ENCODE measurements at regions of chr20 and their contacts with region 1.

Region 1: DNA sequence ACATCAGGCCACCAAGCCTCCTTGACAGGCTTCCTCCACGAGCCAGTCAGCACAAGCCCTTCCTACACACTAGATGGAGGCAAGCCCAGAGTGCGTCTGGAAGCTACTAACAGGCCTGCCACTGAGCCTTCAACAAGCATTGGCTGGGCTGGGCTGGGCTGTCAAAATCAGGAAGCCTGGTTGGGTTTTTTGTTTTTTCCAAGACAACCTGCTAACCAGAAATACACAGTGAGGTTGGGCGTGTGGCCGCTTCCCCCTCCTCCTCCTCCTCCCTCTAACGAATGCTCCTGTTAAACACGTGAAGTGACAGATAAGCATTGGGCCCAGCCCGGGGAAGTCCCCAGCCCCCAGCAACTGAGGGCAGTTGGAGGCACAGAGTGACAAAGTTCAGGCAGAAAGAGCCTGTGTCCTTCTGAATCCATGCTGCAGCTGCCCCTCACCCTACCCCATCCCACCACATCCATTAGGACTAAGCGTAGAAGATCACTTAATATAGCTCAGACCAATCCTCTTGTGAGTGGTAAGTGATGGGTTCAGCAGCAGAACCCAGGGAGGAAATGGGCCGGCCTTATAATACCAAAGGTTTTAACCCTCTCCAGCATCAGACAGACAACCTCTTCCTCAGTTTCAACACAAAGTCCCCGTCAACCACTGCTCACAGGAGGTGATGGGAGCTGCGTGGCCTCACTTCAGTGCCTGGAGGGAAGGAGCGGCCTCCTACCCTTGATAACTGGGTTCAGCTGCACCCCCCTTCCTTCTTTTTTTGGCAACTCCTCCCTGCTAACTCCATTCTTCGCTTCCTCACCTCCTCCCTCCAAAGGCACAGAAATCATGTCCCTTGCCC is 1.1 kb downstream of the NFATC2 start:
- DNase-seq: peak; percentile 92
- H3K4me3 Mint-ChIP-seq: peak overlapping the region; percentile 98
- H3K27ac Mint-ChIP-seq: peak overlapping the region; percentile 98
- H3K4me1 Mint-ChIP-seq: peaks cover 49% of the 10 kb centered on the region
- H3K27me3 Mint-ChIP-seq: peaks cover 3% of the 10 kb centered on the region

Region 2: GRCh38 chr20:51385646-51386530 is 155.5 kb before region 1 on chr20:
- CTCF ChIA-PET with region 1: interaction called, 19 read pairs
- POLR2A ChIA-PET with region 1: interaction called, 3 read pairs
- intact Hi-C with region 1: loop called (anchors 1 kb)
- DNase-seq: peak; percentile 50
- H3K4me3 Mint-ChIP-seq: no peak overlapping the region
- H3K27ac Mint-ChIP-seq: no peak overlapping the region
- H3K4me1 Mint-ChIP-seq: peaks cover 73% of the 10 kb centered on the region
- H3K27me3 Mint-ChIP-seq: no peaks in the 10 kb centered on the region

Region 3: GRCh38 chr20:51423290-51423667 is 118.1 kb before region 1 on chr20:
- CTCF ChIA-PET with region 1: interaction called, 5 read pairs
- POLR2A ChIA-PET with region 1: interaction called, 10 read pairs
- intact Hi-C with region 1: loop called (anchors 1 kb)
- DNase-seq: peak; percentile 78
- H3K4me3 Mint-ChIP-seq: peak overlapping the region; percentile 13
- H3K27ac Mint-ChIP-seq: peak overlapping the region; percentile 90
- H3K4me1 Mint-ChIP-seq: peaks cover 86% of the 10 kb centered on the region
- H3K27me3 Mint-ChIP-seq: no peaks in the 10 kb centered on the region

Region 4: GRCh38 chr20:51480507-51481270 is 60.7 kb before region 1 on chr20:
- CTCF ChIA-PET with region 1: no interaction called
- POLR2A ChIA-PET with region 1: interaction called, 20 read pairs
- intact Hi-C with region 1: loop called (anchors 1 kb)
- DNase-seq: peak; percentile 89
- H3K4me3 Mint-ChIP-seq: peak overlapping the region; percentile 61
- H3K27ac Mint-ChIP-seq: peak overlapping the region; percentile 97
- H3K4me1 Mint-ChIP-seq: peaks cover 88% of the 10 kb centered on the region
- H3K27me3 Mint-ChIP-seq: no peaks in the 10 kb centered on the region

Region 5: DNA sequence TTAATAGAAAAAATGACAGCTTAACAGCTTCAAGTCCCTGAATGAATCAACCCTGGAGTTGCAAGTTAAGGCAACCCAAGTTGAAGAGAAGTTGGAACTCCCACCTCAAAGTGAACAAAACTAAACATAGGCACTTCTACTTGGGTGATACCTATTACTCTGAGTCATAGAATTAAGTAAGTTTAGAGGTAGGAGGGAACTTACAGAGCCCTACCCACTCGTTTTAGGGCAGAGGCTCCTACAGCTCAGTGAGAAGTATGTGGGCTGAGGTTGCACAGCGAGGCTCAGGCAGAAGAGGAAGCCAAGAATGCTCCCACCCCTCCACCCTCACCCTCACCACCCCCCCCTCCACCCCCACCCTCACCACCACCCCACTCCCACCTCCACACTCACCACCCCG is 41.1 kb before region 1 on chr20:
- CTCF ChIA-PET with region 1: interaction called, 11 read pairs
- POLR2A ChIA-PET with region 1: interaction called, 35 read pairs
- intact Hi-C with region 1: loop called (anchors 1 kb)
- DNase-seq: peak; percentile 68
- H3K4me3 Mint-ChIP-seq: no peak overlapping the region
- H3K27ac Mint-ChIP-seq: peak overlapping the region; percentile 94
- H3K4me1 Mint-ChIP-seq: peaks cover 73% of the 10 kb centered on the region
- H3K27me3 Mint-ChIP-seq: no peaks in the 10 kb centered on the region

Region 6: DNA sequence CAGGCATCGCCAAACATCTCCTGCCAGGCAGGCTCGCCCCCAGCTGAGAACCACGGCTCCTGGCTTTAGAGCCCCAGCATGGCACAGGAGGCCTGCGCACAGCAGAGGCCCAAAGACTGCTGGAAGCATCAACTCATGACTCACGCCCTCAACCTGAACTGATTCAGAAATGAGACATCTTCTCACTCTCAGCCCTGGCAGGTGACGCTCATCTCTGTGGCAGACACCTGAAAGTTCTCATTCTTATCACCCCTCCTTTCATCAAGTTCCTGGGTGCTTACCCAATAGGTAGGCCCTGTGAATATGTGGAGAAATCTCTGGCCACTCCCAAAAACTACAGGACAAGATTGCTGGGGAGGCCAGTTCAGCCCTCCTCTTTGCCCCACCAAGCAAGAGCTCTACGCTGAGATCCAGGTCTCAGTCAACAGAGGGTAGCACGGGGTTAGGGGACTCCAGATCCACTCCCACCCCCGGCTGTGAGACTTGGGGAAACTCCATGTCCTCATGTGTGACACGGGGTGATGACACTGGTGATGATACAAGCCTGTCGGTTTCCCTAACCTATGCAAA is 10.2 kb before region 1 on chr20:
- CTCF ChIA-PET with region 1: interaction called, 38 read pairs
- POLR2A ChIA-PET with region 1: interaction called, 128 read pairs
- intact Hi-C with region 1: loop called (anchors 1 kb)
- DNase-seq: peak; percentile 91
- H3K4me3 Mint-ChIP-seq: peak overlapping the region; percentile 84
- H3K27ac Mint-ChIP-seq: peak overlapping the region; percentile 94
- H3K4me1 Mint-ChIP-seq: peaks cover 94% of the 10 kb centered on the region
- H3K27me3 Mint-ChIP-seq: no peaks in the 10 kb centered on the region

Region 7: GRCh38 chr20:51595058-51595532 is 53.7 kb after region 1 on chr20:
- CTCF ChIA-PET with region 1: interaction called, 53 read pairs
- POLR2A ChIA-PET with region 1: interaction called, 5 read pairs
- intact Hi-C with region 1: no loop called
- DNase-seq: peak; percentile 88
- H3K4me3 Mint-ChIP-seq: no peak overlapping the region
- H3K27ac Mint-ChIP-seq: peak overlapping the region; percentile 62
- H3K4me1 Mint-ChIP-seq: peaks cover 56% of the 10 kb centered on the region
- H3K27me3 Mint-ChIP-seq: peaks cover 12% of the 10 kb centered on the region